ENCODE measurements at regions of chr13 and their contacts with region 1.

Region 1: GRCh38 chr13:51911860-51912510 is 50.2 kb downstream of the CCDC70 start:
- DNase-seq: no peak
- ATAC-seq: peak; percentile 69 to 89
- H3K4me3 ChIP-seq: no peak overlapping the region
- H3K27ac ChIP-seq: no peak overlapping the region
- H3K4me1 ChIP-seq: peaks cover 3% of the 10 kb centered on the region
- H3K27me3 ChIP-seq: no peaks in the 10 kb centered on the region

Region 2: GRCh38 chr13:51995677-51996551 is 83.9 kb after region 1 on chr13:
- intact Hi-C with region 1: loop called in 1 of 4 experiments (anchors 10 kb)
- DNase-seq: peak; percentile 32 to 79 (median 69)
- ATAC-seq: peak; percentile 86 to 91
- H3K4me3 ChIP-seq: no peak overlapping the region
- H3K27ac ChIP-seq: peak overlapping the region; percentile 60
- H3K4me1 ChIP-seq: peaks cover 17% of the 10 kb centered on the region
- H3K27me3 ChIP-seq: no peaks in the 10 kb centered on the region

Region 3: DNA sequence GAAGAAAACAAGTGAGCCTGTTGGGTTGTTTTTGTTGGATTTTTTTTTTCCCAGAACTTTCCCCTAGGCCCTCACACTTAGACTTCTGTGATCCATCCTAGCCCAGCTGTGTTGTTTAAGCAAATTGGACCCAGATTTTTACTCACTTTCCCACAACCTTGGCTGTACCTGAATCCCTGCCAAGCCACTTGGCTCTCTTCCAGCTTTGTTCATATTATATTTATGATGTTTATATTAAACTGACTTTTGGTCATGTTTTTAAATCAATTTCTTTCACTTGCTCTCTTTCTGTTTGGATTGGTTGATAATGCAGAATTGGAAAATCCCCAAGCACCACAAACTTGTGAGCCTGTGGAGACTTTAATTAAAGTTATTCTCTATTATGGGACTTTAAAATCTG is 1133.2 kb after region 1 on chr13:
- intact Hi-C with region 1: no loop called
- DNase-seq: no peak
- ATAC-seq: no peak
- H3K4me3 ChIP-seq: no peak overlapping the region
- H3K27ac ChIP-seq: no peak overlapping the region
- H3K4me1 ChIP-seq: no peaks in the 10 kb centered on the region
- H3K27me3 ChIP-seq: no peaks in the 10 kb centered on the region

Measured in right cardiac atrium (tissue), 5 donors.